ENCODE measurements at regions of chr17 and their contacts with region 1.

Region 1: DNA sequence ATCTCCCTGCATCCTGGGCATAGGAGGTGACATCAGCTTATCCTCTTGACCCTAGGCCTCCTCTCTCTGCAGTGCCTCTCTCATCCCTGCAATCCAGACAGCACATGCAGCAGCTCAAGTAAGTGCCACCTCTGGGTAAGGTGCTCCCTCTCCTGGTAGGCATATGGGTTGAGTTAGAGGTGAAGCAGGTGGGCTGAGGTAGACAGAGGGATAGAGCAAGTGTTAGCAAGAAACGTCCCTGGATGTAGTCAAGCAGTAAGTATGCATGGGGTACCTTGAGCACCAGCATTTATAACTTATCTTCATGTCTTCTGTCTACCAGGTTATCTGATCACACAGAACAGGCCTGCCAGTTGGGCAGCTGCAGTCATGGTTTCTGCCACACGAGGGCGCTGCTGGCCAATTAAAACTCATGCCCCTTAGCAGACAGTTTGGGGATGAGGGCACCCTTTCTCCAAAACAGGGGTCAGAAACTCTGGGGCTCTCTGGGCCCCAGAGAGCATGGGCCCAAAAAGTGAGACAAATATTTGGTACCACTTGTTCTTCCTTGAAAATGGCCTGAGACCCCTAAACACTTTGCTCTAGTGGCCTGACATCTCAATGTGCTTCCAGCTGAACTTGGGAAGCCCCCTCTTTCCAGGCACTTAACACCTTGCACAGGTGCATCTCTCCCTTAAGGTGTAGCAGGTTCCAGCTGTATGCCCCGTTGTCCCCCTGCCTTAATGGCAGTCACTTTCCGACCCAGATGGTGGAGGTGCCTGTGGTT is 59.8 kb downstream of the NEUROD2 start:
- DNase-seq: peak; percentile 74
- ATAC-seq: peak; percentile 65
- H3K4me3 Mint-ChIP-seq: no peak overlapping the region
- H3K27ac Mint-ChIP-seq: no peak overlapping the region
- H3K4me1 Mint-ChIP-seq: peaks cover 40% of the 10 kb centered on the region
- H3K27me3 Mint-ChIP-seq: no peaks in the 10 kb centered on the region
- CTCF ChIP-seq: peak; percentile 78

Region 2: DNA sequence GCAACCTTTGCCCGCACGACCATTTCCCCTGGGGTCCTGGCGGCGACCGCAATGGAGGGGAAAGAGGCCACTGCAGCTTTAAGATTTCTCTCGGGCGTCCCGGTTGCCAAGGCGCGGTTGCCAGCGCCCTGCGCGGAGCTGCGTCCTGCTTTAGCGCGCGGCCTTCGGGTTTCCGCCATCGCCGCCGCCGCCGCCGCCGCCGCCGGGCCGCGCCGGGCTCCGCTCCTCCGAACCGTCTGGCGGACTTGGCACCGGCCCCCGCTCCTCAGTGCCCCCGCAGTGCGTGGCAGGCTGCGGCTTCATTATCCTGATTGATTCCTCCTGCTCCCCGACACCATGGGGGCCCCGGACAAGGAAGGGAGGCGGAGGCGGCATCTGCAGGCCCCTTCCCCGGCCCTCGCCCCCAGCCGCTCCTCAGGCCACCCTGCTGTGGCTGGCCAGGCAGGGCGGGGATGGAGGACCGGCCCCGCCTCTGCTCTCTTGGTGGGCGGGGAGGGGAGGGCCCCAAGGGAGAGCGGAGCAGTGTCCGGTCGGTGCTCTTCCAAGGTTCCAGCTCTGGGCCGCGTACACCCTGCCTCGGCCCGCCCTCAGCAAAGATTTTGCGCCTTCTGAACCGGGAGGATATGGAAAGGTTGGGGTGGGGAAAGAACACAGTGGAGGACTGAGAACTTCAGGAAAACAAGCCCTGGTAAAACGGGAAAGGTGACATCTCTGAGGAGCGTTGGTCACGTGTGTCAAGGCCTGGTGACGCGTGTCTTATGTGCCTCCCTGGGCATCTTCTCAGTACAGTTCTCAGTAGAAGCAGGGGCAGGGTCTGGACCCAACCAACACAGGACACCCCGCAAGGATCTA is 25.8 kb after region 1 on chr17:
- CTCF ChIA-PET with region 1: interaction called, 9 read pairs
- POLR2A ChIA-PET with region 1: interaction called, 9 read pairs
- intact Hi-C with region 1: loop called (anchors 1 kb)
- DNase-seq: peak; percentile 29
- ATAC-seq: peak; percentile 72
- H3K4me3 Mint-ChIP-seq: peak overlapping the region; percentile 90
- H3K27ac Mint-ChIP-seq: no peak overlapping the region
- H3K4me1 Mint-ChIP-seq: peaks cover 4% of the 10 kb centered on the region
- H3K27me3 Mint-ChIP-seq: peaks cover 10% of the 10 kb centered on the region
- CTCF ChIP-seq: no peak

Region 3: DNA sequence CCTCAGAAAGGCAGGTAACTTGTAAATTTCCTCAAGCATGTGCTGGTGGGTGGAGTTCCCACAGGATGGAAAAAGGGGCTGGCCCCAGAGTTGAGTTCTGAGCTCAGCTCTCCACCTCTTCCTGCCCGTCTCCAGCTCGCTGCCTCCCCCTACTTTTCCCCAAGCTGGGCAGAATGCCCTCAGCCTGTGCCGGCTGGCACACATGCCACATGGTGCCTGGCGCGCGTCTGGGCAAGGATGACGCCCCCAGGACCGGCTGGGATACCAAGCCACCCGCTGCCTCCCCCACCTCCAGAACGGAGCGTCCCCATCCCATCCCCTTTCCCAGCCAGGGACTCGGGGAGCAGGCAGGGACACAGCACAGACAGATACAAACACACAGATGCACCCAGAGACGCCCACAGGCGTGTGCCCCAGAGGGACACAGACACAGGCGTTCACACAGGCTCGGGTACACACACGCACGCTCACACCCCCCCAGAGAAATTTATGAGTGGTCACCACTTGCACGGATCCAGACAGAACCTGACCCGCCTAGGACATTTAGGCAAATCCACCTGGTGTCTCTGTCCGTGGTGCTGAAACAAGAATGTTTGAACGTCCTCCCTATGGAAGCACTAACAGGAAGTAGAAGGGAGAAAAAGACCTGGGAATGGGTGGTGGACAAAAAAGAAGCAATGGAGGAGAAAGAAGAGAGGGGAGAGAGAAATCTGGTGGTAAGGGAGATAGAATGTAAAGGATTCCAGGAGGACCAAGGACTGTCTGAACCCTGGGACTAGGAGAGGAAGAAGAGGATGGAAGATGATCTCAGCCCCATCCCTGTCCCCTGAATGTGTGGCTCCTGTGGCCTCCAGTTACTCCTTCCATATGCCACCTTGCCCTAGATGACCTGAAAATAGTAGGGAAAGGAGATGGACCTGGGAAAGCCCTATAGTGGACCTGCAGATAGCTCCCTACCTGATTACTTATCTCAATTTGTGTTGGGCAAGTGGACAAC is 44.4 kb after region 1 on chr17:
- CTCF ChIA-PET with region 1: no interaction called
- POLR2A ChIA-PET with region 1: no interaction called
- intact Hi-C with region 1: no loop called
- DNase-seq: no peak
- ATAC-seq: no peak
- H3K4me3 Mint-ChIP-seq: no peak overlapping the region
- H3K27ac Mint-ChIP-seq: no peak overlapping the region
- H3K4me1 Mint-ChIP-seq: peaks cover 5% of the 10 kb centered on the region
- H3K27me3 Mint-ChIP-seq: peaks cover 47% of the 10 kb centered on the region
- CTCF ChIP-seq: no peak

Region 4: DNA sequence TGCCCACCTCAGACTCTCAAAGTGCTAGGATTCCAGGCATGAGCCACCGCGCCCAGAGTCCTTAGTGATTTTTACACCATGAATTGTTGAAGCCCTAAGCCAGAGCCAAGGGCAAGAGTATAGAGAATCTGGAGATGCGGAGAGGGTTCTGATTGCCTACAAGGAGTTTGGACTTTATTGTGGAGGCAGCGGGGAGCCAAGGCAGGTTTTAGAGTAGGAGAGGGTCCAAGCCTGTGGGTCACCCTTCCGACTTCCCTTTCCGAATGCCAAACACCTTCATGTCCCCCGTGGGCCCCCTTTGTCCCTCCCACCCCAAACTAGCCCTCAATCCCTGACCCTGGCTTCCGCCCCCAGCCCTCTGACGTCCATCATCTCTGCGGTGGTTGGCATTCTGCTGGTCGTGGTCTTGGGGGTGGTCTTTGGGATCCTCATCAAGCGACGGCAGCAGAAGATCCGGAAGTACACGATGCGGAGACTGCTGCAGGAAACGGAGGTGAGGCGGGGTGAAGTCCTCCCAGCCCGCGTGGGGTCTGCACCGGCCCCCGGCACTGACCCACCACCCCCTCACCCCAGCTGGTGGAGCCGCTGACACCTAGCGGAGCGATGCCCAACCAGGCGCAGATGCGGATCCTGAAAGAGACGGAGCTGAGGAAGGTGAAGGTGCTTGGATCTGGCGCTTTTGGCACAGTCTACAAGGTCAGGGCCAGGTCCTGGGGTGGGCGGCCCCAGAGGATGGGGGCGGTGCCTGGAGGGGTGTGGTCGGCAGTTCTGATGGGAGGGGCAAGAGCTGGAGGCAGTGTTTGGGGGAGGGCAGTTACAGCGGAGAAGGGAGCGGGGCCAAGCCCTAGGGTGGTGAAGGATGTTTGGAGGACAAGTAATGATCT is 175.3 kb after region 1 on chr17:
- CTCF ChIA-PET with region 1: no interaction called
- POLR2A ChIA-PET with region 1: interaction called, 10 read pairs
- intact Hi-C with region 1: no loop called
- DNase-seq: no peak
- ATAC-seq: peak; percentile 50
- H3K4me3 Mint-ChIP-seq: no peak overlapping the region
- H3K27ac Mint-ChIP-seq: no peak overlapping the region
- H3K4me1 Mint-ChIP-seq: peaks cover 2% of the 10 kb centered on the region
- H3K27me3 Mint-ChIP-seq: no peaks in the 10 kb centered on the region
- CTCF ChIP-seq: no peak

Region 5: DNA sequence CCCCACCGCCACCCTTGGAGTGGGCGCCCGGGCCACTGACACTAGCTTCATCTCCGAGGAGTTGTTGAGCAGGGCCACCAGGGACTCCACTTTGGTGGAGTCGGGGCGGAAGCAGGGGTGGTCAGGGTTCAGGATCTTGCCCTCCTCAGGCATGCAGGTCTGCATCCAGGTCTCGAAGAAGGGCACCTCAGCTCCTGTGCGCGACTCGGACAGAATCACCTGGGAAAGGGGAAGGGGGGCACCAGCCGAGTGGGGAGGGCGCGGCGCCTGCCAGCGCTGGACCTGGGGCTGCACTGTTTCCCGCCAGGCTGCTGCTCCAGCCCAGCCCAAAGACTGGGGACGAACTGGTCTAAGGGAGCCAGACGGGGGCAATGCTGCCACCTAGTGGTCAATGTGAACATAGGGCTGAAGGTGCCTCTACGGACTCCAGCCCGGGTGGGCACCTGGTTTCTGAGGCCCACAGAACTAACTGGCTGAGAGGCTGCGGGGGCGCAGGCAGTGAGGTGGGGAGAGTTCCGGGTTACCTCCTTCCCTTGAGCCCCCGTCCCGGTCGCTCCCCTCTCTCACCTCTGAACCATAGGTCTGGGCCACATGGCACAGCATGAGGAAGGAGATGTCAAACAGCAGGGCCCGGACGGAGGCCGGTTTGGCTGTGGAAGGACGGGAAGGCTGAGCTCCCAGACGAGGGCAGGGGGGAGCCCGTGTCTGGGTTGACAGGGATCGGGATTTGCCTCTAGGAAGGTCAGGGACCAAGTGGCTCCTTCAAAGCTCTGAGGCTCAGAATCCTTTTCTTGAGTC is 479.1 kb after region 1 on chr17:
- CTCF ChIA-PET with region 1: interaction called, 3 read pairs
- POLR2A ChIA-PET with region 1: no interaction called
- intact Hi-C with region 1: loop called (anchors 2 kb)
- DNase-seq: peak; percentile 62
- ATAC-seq: peak; percentile 92
- H3K4me3 Mint-ChIP-seq: no peak overlapping the region
- H3K27ac Mint-ChIP-seq: no peak overlapping the region
- H3K4me1 Mint-ChIP-seq: no peaks in the 10 kb centered on the region
- H3K27me3 Mint-ChIP-seq: no peaks in the 10 kb centered on the region
- CTCF ChIP-seq: no peak